Activated naive CD4-positive, alpha-beta T cell treated with anti-CD3 and anti-CD28 coated beads for 36 hours (primary cell): ENCODE measurements at regions of chr6 and their contacts with region 1.

Region 1: DNA sequence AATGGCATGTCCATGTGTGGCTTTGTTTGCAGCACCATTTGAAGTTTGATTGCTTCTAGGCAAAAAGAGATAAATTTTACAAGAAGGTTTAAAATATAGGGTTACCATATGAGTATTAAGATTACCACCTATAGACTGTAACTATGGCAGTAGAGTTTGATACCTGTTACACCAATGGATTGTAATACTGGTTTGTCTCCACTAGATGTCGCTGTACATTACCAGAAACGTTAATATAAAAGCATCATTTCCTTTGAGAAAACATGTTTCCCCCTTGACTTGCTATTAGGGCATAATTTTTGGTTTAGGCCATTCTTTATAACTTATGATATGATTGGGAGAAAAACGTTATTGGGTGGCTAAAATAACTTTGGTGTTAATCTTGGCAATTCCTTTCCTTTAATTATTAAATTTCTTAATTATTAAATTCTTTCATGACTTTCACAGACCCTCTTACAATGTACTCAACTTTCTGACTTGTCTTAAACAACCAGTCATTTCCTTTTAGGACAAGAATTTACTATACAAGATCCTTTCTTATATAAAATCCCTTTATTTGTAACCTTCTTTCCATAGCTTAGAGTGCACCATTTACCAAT is 42.8 kb downstream of the HLA-DPB1 start:
- DNase-seq: no peak
- H3K4me3 Mint-ChIP-seq: no peak overlapping the region
- H3K27ac Mint-ChIP-seq: no peak overlapping the region
- H3K4me1 Mint-ChIP-seq: peaks cover 7% of the 10 kb centered on the region
- H3K27me3 Mint-ChIP-seq: peaks cover 37% of the 10 kb centered on the region

Region 2: DNA sequence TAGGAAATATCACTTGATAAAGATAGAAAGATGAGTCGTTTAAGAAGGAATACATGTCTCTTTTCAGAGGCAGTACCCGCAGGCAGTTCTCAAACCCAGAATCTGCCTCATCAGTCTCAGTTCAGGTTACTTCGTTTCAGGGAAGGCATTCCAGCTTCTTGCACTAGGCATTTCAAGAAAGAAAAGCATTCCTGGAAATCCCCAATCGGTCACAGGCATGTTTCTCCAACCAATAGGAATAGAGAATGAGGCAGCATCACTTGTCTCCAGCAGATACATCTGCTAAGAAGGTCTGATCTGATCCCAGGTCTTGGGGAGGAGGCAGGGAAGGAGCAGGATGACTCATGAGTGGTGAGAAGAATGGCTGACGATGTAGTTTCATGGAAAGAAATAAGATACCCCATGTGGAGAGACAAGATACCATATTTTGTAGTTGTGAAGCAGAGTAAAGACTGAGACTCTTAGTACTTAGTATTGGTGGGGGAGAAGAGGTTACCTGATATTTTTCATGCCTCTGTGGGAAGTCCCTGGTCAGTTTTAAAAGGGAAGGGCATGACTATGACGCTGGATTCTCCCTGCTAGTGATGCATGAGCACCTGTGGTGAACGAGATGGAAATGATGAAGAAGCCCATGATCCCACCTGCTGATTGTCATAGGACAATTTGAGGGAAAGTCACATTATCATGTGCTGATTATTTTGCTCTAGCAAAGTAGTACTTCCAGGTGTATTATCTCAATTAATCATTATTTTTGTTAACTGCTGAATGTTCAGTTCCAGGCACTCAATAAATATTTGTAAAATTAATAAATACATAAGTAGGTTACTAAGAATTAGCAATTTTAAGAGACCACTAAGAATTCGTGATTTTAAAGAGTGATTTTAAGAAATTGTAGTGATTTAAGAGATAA is 508.6 kb before region 1 on chr6:
- CTCF ChIA-PET with region 1: no interaction called
- intact Hi-C with region 1: no loop called
- DNase-seq: peak; percentile 69
- H3K4me3 Mint-ChIP-seq: no peak overlapping the region
- H3K27ac Mint-ChIP-seq: no peak overlapping the region
- H3K4me1 Mint-ChIP-seq: peaks cover 14% of the 10 kb centered on the region
- H3K27me3 Mint-ChIP-seq: no peaks in the 10 kb centered on the region

Region 3: GRCh38 chr6:33161354-33162331 is 43.0 kb after region 1 on chr6:
- CTCF ChIA-PET with region 1: interaction called, 5 read pairs
- intact Hi-C with region 1: loop called (anchors 5 kb)
- DNase-seq: peak; percentile 85
- H3K4me3 Mint-ChIP-seq: peak overlapping the region; percentile 78
- H3K27ac Mint-ChIP-seq: no peak overlapping the region
- H3K4me1 Mint-ChIP-seq: peaks cover 12% of the 10 kb centered on the region
- H3K27me3 Mint-ChIP-seq: no peaks in the 10 kb centered on the region